GM10248 (cell line): ENCODE measurements at regions of chr14 and their contacts with region 1.

Region 1: GRCh38 chr14:64294672-64295413 is 672 bp upstream of the ESR2 start:
- DNase-seq: peak; percentile 88
- CTCF ChIP-seq: peak; percentile 75

Region 2: GRCh38 chr14:63800651-63801375 is 494.0 kb before region 1 on chr14:
- CTCF ChIA-PET with region 1: interaction called, 65 read pairs
- POLR2A ChIA-PET with region 1: no interaction called
- DNase-seq: no peak
- CTCF ChIP-seq: no peak

Region 3: DNA sequence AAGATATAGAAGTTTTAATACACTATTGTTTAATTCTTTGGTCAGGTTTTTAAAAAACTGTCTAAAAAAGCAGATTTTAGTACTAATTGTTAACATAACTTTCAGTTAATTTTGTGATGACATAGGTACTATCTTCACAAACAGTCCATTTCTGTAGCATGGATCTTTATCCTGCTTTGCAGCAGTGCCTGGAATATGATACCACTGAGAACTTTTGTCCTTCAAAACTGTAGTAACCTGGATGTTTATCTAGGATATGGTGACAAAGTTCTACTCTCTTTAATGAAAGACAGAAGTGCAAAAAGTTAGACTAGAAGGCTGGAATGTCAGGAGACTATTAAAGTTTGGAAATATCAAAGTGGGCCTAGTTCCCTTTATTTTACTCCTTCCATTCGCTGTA is 282.1 kb before region 1 on chr14:
- CTCF ChIA-PET with region 1: interaction called, 15 read pairs
- POLR2A ChIA-PET with region 1: no interaction called
- DNase-seq: no peak
- CTCF ChIP-seq: no peak

Region 4: GRCh38 chr14:64137657-64138290 is 157.1 kb before region 1 on chr14:
- CTCF ChIA-PET with region 1: interaction called, 21 read pairs
- POLR2A ChIA-PET with region 1: no interaction called
- DNase-seq: no peak
- CTCF ChIP-seq: peak; percentile 15

Region 5: GRCh38 chr14:64234877-64235651 is 59.8 kb before region 1 on chr14:
- CTCF ChIA-PET with region 1: interaction called, 15 read pairs
- POLR2A ChIA-PET with region 1: no interaction called
- DNase-seq: no peak
- CTCF ChIP-seq: no peak

Region 6: DNA sequence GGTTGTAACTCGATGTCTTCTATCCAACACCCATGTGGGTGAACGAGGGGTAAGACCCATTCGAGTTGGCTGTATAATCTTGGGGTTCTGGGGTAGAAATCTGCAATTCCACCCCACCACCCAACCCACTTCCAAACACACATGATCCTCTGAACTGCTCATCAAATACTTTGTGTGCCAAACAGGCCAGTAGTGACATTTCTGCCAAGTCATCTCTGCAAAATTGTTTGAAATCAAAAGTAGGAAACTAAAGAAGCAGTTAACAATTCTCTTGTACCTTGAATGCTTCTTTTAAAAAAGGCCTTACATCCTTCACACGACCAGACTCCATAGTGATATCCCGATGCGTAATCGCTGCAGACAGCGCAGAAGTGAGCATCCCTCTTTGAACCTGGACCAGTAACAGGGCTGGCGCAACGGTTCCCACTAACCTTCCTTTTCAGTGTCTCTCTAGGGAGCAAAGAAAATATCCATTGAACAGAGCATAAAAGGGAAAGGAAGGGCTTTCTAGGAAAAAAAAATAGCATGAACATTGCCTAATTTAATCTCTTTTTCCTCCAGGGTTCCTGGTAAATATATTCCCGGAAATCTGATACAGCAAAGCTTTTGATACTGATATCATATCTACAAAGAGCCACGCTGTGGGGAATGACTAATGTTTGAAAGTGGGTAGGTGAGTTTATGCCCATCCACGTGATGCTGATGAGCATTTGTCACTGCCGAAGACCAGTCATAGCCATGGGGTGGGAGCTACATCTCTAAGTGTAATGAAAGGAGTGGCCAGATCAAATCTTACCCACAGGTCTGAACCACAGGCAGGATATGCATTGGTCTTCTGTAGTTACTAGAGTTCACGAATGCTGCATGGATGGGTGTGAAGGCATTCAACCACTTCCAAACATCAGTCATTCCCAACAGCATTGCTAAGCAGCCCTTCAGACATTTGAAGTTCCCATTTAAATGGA is 14.9 kb before region 1 on chr14:
- CTCF ChIA-PET with region 1: interaction called, 27 read pairs
- POLR2A ChIA-PET with region 1: no interaction called
- DNase-seq: no peak
- CTCF ChIP-seq: no peak

Region 7: DNA sequence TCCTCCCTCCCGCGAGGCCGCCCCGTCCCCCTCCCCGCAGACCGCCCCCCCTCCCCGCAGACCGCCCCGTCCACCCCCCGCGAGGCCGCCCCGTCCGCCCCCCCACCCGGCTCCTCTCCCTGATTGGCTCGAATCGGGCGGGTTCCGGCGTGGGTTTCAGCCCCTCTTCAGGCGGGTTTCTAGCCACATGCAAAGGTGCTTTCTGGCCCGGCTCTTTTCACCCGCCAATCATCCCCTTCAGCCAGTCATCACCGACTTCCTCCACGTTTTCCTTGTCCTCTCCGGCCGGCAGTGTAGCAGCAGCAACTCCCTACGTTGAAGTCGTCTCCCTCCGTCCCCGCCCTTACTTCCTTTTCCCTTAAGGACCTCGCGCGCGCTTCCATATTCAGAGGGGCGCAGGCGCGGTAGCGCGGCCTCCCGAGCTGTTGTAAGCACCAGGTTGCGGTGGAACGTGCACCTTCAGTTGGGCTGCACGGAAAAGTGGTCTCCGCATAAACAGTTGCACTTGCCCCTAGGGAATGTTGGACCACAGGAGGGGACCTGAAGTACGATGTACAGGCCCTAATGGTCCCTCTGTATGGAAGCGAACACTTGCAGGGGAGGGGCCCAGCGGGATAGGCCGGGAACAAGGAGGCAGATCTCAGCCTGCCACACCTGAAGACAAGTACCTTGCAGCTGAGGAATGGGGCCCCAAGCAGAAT is 43.9 kb after region 1 on chr14:
- CTCF ChIA-PET with region 1: interaction called, 11 read pairs
- POLR2A ChIA-PET with region 1: no interaction called
- DNase-seq: peak; percentile 97
- CTCF ChIP-seq: no peak

Region 8: GRCh38 chr14:64369201-64369600 is 74.4 kb after region 1 on chr14:
- CTCF ChIA-PET with region 1: no interaction called
- POLR2A ChIA-PET with region 1: no interaction called
- DNase-seq: no peak
- CTCF ChIP-seq: no peak

Region 9: GRCh38 chr14:64387694-64388532 is 93.1 kb after region 1 on chr14 and contains the start of gene MTHFD1:
- CTCF ChIA-PET with region 1: no interaction called
- POLR2A ChIA-PET with region 1: no interaction called
- DNase-seq: peak; percentile 98
- CTCF ChIP-seq: no peak